CD4-positive, alpha-beta T cell (primary cell): ENCODE measurements at regions of chr20 and their contacts with region 1.

Region 1: GRCh38 chr20:23937303-23938117 is 51.1 kb downstream of the GGTLC1 start:
- DNase-seq: peak; percentile 51 to 84 (median 61)
- ATAC-seq: peak; percentile 99
- H3K4me3 ChIP-seq: no peak overlapping the region
- H3K4me3 Mint-ChIP-seq: no peak overlapping the region
- H3K27ac ChIP-seq: no peak overlapping the region
- H3K27ac Mint-ChIP-seq: no peak overlapping the region
- H3K4me1 ChIP-seq: no peaks in the 10 kb centered on the region
- H3K4me1 Mint-ChIP-seq: no peaks in the 10 kb centered on the region
- H3K27me3 ChIP-seq: no peaks in the 10 kb centered on the region
- H3K27me3 Mint-ChIP-seq: no peaks in the 10 kb centered on the region
- CTCF ChIP-seq: peak; percentile 74

Region 2: GRCh38 chr20:23585808-23586734 is 351.4 kb before region 1 on chr20:
- CTCF ChIA-PET with region 1: no interaction called
- POLR2A ChIA-PET with region 1: no interaction called
- intact Hi-C with region 1: no loop called
- DNase-seq: no peak
- ATAC-seq: no peak
- H3K4me3 ChIP-seq: no peak overlapping the region
- H3K4me3 Mint-ChIP-seq: no peak overlapping the region
- H3K27ac ChIP-seq: no peak overlapping the region
- H3K27ac Mint-ChIP-seq: no peak overlapping the region
- H3K4me1 ChIP-seq: no peaks in the 10 kb centered on the region
- H3K4me1 Mint-ChIP-seq: no peaks in the 10 kb centered on the region
- H3K27me3 ChIP-seq: peaks cover 5 to 17% of the 10 kb centered on the region in 2 experiments
- H3K27me3 Mint-ChIP-seq: peaks cover 21% of the 10 kb centered on the region
- CTCF ChIP-seq: no peak

Region 3: DNA sequence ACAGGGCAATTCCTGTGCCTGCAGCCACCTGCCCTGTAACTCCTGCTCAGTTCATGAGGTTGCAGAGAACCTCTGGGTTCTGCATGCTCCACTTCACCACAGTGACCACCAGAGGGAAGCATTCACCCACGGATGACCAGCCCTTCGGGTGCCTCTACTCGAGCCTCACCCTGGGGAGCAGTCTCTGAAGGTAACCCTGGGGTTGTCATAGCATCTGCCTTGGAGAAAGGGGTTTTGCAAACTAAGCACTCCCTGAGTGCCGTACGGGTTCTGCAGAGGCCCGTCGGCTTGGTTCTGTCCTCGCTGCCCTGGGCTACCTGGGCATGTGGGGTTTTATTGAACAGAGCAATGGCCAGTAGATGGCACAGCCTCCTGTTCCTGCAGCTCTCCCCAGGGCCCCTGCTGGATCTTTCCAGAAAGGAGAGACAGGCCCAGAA is 47.7 kb before region 1 on chr20:
- CTCF ChIA-PET with region 1: no interaction called
- POLR2A ChIA-PET with region 1: no interaction called
- intact Hi-C with region 1: loop called (anchors 2 to 10 kb)
- DNase-seq: peak; percentile 31 to 84 (median 58)
- ATAC-seq: peak; percentile 98
- H3K4me3 ChIP-seq: no peak overlapping the region
- H3K4me3 Mint-ChIP-seq: no peak overlapping the region
- H3K27ac ChIP-seq: no peak overlapping the region
- H3K27ac Mint-ChIP-seq: no peak overlapping the region
- H3K4me1 ChIP-seq: peaks cover 6% of the 10 kb centered on the region
- H3K4me1 Mint-ChIP-seq: peaks cover 4% of the 10 kb centered on the region
- H3K27me3 ChIP-seq: peaks cover 0 to 3% of the 10 kb centered on the region in 2 experiments
- H3K27me3 Mint-ChIP-seq: no peaks in the 10 kb centered on the region
- CTCF ChIP-seq: peak; percentile 76

Region 4: DNA sequence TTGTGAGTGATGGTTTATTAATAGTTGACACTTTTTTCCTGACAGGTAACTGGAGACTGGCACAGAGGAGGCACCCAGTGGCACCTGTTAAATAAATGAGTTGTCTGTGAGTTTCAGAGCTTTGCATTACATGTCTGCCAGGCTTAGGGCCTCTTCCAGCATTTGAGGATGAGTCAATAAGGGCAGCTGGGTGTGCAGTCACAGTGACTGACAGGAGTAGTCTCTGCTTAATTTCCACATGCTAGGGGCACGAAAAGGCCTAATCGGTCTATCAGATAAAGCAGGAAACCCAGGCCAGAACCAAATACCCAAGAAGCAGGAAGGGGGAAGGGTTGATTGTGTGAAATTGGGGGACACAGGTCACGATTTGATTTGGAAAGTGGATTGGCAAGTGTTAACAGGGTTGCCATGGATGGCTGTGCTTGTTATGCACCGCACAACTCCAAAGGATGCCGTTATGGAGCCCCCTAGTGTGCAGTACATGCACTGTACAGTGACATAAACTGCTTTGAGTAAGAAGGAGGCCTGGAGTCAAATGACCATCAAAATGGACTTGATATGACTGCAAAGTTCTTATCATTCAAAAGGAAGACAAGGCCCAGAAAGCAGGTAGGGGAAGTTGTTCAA is 163.0 kb after region 1 on chr20:
- CTCF ChIA-PET with region 1: interaction called, 12 read pairs
- POLR2A ChIA-PET with region 1: interaction called, 4 read pairs
- intact Hi-C with region 1: loop called (anchors 1 kb)
- DNase-seq: peak; percentile 17 to 79 (median 54)
- ATAC-seq: peak; percentile 96
- H3K4me3 ChIP-seq: no peak overlapping the region
- H3K4me3 Mint-ChIP-seq: no peak overlapping the region
- H3K27ac ChIP-seq: no peak overlapping the region
- H3K27ac Mint-ChIP-seq: no peak overlapping the region
- H3K4me1 ChIP-seq: peaks cover 5% of the 10 kb centered on the region
- H3K4me1 Mint-ChIP-seq: no peaks in the 10 kb centered on the region
- H3K27me3 ChIP-seq: no peaks in the 10 kb centered on the region
- H3K27me3 Mint-ChIP-seq: peaks cover 5% of the 10 kb centered on the region
- CTCF ChIP-seq: peak; percentile 80

Region 5: DNA sequence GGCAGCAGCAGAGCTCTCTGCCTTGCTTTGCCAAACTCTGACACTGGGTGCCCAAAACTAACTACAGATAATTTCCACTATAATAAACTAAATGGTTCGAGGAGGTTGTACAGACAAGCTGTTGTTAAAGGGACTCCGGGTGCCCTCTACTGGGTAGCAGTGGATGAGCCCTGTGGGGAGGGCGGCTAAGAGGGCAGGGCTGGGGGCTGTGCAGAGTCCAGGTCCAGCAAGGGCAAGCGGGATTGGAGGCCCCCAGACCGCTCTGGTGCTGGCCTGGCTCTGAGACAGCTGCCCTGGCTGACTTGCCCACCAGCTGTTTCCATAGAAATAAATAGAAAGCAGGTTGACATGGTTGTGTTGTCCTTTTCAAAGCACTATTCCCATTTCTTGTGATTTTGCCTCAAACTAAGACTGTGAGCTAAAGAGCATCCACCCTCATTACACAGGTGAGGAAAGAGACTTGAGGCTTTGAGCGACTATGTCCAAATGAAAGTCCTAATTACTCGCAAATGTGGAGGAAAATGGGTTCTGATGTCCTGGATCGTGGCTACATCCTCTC is 844.0 kb after region 1 on chr20:
- CTCF ChIA-PET with region 1: no interaction called
- POLR2A ChIA-PET with region 1: no interaction called
- intact Hi-C with region 1: loop called in 1 of 2 experiments (anchors 5 kb)
- DNase-seq: peak in 1 of 14 experiments; percentile 7
- ATAC-seq: no peak
- H3K4me3 ChIP-seq: no peak overlapping the region
- H3K4me3 Mint-ChIP-seq: no peak overlapping the region
- H3K27ac ChIP-seq: no peak overlapping the region
- H3K27ac Mint-ChIP-seq: no peak overlapping the region
- H3K4me1 ChIP-seq: no peaks in the 10 kb centered on the region
- H3K4me1 Mint-ChIP-seq: no peaks in the 10 kb centered on the region
- H3K27me3 ChIP-seq: peaks cover 0 to 2% of the 10 kb centered on the region in 2 experiments
- H3K27me3 Mint-ChIP-seq: peaks cover 15% of the 10 kb centered on the region
- CTCF ChIP-seq: no peak

Region 6: DNA sequence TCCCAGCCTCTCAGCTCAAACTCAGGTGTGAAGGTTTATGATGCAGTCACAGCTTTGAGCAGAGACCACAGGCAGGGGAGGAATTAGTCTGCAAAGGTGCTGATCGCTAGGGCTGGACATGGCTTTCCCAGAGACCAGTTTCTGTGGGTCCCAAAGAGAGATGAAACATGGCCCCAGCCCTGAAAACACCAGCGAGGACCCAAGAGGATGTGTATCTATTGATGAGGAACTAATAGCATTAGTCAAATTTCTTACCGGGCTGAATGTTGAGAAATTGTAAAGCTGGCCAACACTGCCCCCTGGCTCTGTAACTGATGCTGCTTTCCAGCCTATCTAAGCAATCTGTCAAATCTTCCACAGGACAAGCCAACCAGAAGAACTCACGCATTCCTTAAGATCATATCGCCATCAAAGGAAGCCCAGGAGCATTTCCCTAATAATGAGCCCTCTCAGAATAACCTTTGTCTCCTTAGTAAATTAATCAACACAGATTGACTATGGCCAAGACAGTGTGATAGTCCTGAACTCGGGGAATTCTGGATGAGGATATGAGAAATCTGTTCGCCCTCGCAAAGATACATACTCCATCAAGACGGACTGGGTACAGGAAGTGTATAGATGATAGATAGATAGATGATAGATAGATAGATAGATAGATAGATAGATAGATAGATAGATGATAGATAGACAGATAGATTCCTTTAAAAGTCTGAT is 1128.3 kb after region 1 on chr20:
- CTCF ChIA-PET with region 1: no interaction called
- POLR2A ChIA-PET with region 1: no interaction called
- intact Hi-C with region 1: loop called in 1 of 2 experiments (anchors 1 kb)
- DNase-seq: peak; percentile 55 to 85 (median 64)
- ATAC-seq: peak; percentile 69
- H3K4me3 ChIP-seq: no peak overlapping the region
- H3K4me3 Mint-ChIP-seq: no peak overlapping the region
- H3K27ac ChIP-seq: no peak overlapping the region
- H3K27ac Mint-ChIP-seq: no peak overlapping the region
- H3K4me1 ChIP-seq: peaks cover 6% of the 10 kb centered on the region
- H3K4me1 Mint-ChIP-seq: peaks cover 7% of the 10 kb centered on the region
- H3K27me3 ChIP-seq: peaks cover 6 to 13% of the 10 kb centered on the region in 2 experiments
- H3K27me3 Mint-ChIP-seq: peaks cover 26% of the 10 kb centered on the region
- CTCF ChIP-seq: peak; percentile 75